H1 (cell line): ENCODE measurements at regions of chr15 and their contacts with region 1.

Region 1: GRCh38 chr15:76139368-76140073 is 79.7 kb downstream of the TMEM266 start:
- DNase-seq: peak; percentile 65 to 94
- H3K4me3 ChIP-seq: peak overlapping the region in 2 of 4 experiments; percentile 2 to 8; a peak in 2 of 8 replicates
- H3K27ac ChIP-seq: no peak overlapping the region
- H3K4me1 ChIP-seq: peaks cover 5 to 12% (median 7%) of the 10 kb centered on the region in 4 experiments
- H3K27me3 ChIP-seq: no peaks in the 10 kb centered on the region; a peak in 1 of 7 replicates
- CTCF ChIP-seq: peak; percentile 80 to 97 (median 88)
- EP300 ChIP-seq: no peak
- POLR2A ChIP-seq: no peak
- RAD21 ChIP-seq: peak; percentile 94

Region 2: DNA sequence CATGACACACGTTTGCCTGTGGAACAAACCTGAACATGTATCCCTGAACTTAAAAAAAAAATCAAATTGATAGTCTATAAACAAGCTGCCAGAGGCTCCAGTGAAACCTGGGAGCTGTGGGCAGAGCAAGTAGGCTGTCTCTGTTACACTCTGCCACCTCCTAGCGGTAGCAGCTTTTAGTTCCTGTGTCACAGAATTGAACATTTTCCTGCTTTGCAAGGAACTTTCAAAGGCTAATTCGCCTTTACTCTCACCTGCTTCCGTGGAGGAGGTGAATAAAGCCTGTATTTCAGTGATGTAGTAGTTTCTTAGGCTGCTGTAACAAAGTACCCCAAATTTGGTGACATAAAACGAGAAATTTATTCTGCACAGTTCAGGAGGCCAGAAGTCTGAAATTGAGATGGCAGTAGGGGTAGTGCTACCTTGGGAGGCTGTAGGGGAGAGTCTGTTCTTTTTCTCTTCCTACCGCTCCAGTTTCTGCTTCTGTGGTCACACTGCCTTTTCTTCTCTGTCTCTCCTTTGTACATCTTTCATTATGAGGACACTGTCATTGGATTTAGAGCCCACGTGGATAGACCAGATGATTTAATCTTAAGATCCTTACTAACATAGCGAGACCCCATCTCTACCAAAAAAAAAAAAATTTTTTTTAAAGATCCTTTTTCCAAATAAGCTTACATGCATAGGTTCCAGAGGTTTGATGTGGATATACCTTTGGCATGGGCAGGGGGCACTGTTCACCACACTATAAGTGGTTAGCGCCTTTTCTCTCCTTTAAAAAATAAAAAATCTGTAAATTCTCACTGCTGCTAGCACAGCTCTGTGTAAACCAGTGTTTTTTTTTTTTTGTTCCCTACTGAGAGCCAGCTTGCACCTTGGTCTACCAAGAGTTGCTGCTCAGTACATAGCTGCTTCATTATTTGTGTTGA is 210.6 kb before region 1 on chr15:
- CTCF ChIA-PET with region 1: interaction called, 41 read pairs
- POLR2A ChIA-PET with region 1: no interaction called
- DNase-seq: peak in 1 of 2 experiments; percentile 60
- H3K4me3 ChIP-seq: no peak overlapping the region
- H3K27ac ChIP-seq: no peak overlapping the region
- H3K4me1 ChIP-seq: peaks cover 0 to 11% (median 3%) of the 10 kb centered on the region in 4 experiments; a peak in 3 of 7 replicates
- H3K27me3 ChIP-seq: no peaks in the 10 kb centered on the region
- CTCF ChIP-seq: peak; percentile 60 to 87 (median 76)
- EP300 ChIP-seq: no peak
- POLR2A ChIP-seq: no peak
- RAD21 ChIP-seq: peak; percentile 68 to 76

Region 3: GRCh38 chr15:76065267-76065666 is 74.3 kb before region 1 on chr15:
- CTCF ChIA-PET with region 1: interaction called, 164 read pairs
- POLR2A ChIA-PET with region 1: interaction called, 11 read pairs
- DNase-seq: no peak
- H3K4me3 ChIP-seq: no peak overlapping the region
- H3K27ac ChIP-seq: no peak overlapping the region
- H3K4me1 ChIP-seq: peaks cover 2 to 10% (median 5%) of the 10 kb centered on the region in 4 experiments
- H3K27me3 ChIP-seq: peaks cover 0 to 7% (median 0%) of the 10 kb centered on the region in 4 experiments; a peak in 4 of 7 replicates
- CTCF ChIP-seq: no peak
- EP300 ChIP-seq: no peak
- POLR2A ChIP-seq: no peak
- RAD21 ChIP-seq: no peak

Region 4: GRCh38 chr15:76098685-76099084 is 40.8 kb before region 1 on chr15:
- CTCF ChIA-PET with region 1: interaction called, 10 read pairs
- POLR2A ChIA-PET with region 1: no interaction called
- DNase-seq: no peak
- H3K4me3 ChIP-seq: no peak overlapping the region
- H3K27ac ChIP-seq: no peak overlapping the region
- H3K4me1 ChIP-seq: peaks cover 0 to 5% (median 2%) of the 10 kb centered on the region in 4 experiments; a peak in 2 of 7 replicates
- H3K27me3 ChIP-seq: no peaks in the 10 kb centered on the region
- CTCF ChIP-seq: no peak
- EP300 ChIP-seq: no peak
- POLR2A ChIP-seq: no peak
- RAD21 ChIP-seq: no peak

Region 5: GRCh38 chr15:76115888-76116885 is 23.3 kb before region 1 on chr15:
- CTCF ChIA-PET with region 1: interaction called, 38 read pairs
- POLR2A ChIA-PET with region 1: interaction called, 15 read pairs
- DNase-seq: peak in 1 of 2 experiments; percentile 54
- H3K4me3 ChIP-seq: peak overlapping the region in 1 of 4 experiments; percentile 21; a peak in 2 of 8 replicates
- H3K27ac ChIP-seq: no peak overlapping the region
- H3K4me1 ChIP-seq: peaks cover 0 to 10% (median 7%) of the 10 kb centered on the region in 4 experiments; a peak in 6 of 7 replicates
- H3K27me3 ChIP-seq: no peaks in the 10 kb centered on the region
- CTCF ChIP-seq: peak in 1 of 3 experiments; percentile 15; a peak in 1 of 4 replicates
- EP300 ChIP-seq: no peak
- POLR2A ChIP-seq: no peak
- RAD21 ChIP-seq: peak; percentile 9 to 37; a peak in 1 of 4 replicates

Region 6: GRCh38 chr15:76150971-76151598 is 11.6 kb after region 1 on chr15:
- CTCF ChIA-PET with region 1: interaction called, 114 read pairs
- POLR2A ChIA-PET with region 1: interaction called, 8 read pairs
- DNase-seq: peak; percentile 85 to 96
- H3K4me3 ChIP-seq: peak overlapping the region in 3 of 4 experiments; percentile 8 to 25 (median 23); a peak in 1 of 8 replicates
- H3K27ac ChIP-seq: no peak overlapping the region
- H3K4me1 ChIP-seq: peaks cover 0 to 26% (median 21%) of the 10 kb centered on the region in 4 experiments; a peak in 6 of 7 replicates
- H3K27me3 ChIP-seq: no peaks in the 10 kb centered on the region
- CTCF ChIP-seq: peak; percentile 90 to 91 (median 91)
- EP300 ChIP-seq: no peak
- POLR2A ChIP-seq: no peak
- RAD21 ChIP-seq: peak; percentile 72 to 82